SK-N-SH (cell line): ENCODE measurements at regions of chr2 and their contacts with region 1.

Region 1: GRCh38 chr2:117631152-117631945 is 183.1 kb upstream of the DDX18 start:
- DNase-seq: peak; percentile 80
- H3K4me3 ChIP-seq: no peak overlapping the region
- H3K27ac ChIP-seq: peak overlapping the region in 1 of 2 experiments; percentile 99; a peak in 2 of 4 replicates
- H3K4me1 ChIP-seq: peaks cover 0 to 28% of the 10 kb centered on the region in 2 experiments; a peak in 2 of 4 replicates
- H3K27me3 ChIP-seq: no peaks in the 10 kb centered on the region
- CTCF ChIP-seq: no peak
- EP300 ChIP-seq: peak; percentile 65 to 100; a peak in 3 of 4 replicates
- RAD21 ChIP-seq: peak; percentile 33

Region 2: GRCh38 chr2:117661619-117662018 is 30.3 kb after region 1 on chr2:
- CTCF ChIA-PET with region 1: interaction called, 6 read pairs
- POLR2A ChIA-PET with region 1: interaction called, 18 read pairs
- DNase-seq: peak; percentile 71
- H3K4me3 ChIP-seq: no peak overlapping the region
- H3K27ac ChIP-seq: peak overlapping the region in 1 of 2 experiments; percentile 98; a peak in 2 of 4 replicates
- H3K4me1 ChIP-seq: peaks cover 0 to 33% of the 10 kb centered on the region in 2 experiments; a peak in 2 of 4 replicates
- H3K27me3 ChIP-seq: no peaks in the 10 kb centered on the region
- CTCF ChIP-seq: no peak
- EP300 ChIP-seq: peak; percentile 46 to 99; a peak in 3 of 4 replicates
- RAD21 ChIP-seq: peak; percentile 26

Region 3: GRCh38 chr2:117714745-117715417 is 83.5 kb after region 1 on chr2:
- CTCF ChIA-PET with region 1: interaction called, 3 read pairs
- POLR2A ChIA-PET with region 1: interaction called, 10 read pairs
- DNase-seq: no peak
- H3K4me3 ChIP-seq: no peak overlapping the region
- H3K27ac ChIP-seq: peak overlapping the region in 1 of 2 experiments; percentile 97; a peak in 2 of 4 replicates
- H3K4me1 ChIP-seq: peaks cover 0 to 45% of the 10 kb centered on the region in 2 experiments; a peak in 2 of 4 replicates
- H3K27me3 ChIP-seq: no peaks in the 10 kb centered on the region
- CTCF ChIP-seq: no peak
- EP300 ChIP-seq: no peak
- RAD21 ChIP-seq: no peak